Activated T-helper 1 cell treated with anti-CD3 and anti-CD28 coated beads, Interleukin-12 subunit alpha, Interleukin-12 subunit beta, Interleukin-2, Interleukin-4 antibody, amounts not matched to agents 30 ng/mL and 10 ng/mL and 1 ng/mL, durations not matched to agents 14 hours and 24 hours and 36 hours (primary cell): ENCODE measurements at regions of chr19 and their contacts with region 1.

Region 1: GRCh38 chr19:35716801-35717666 is 769 bp upstream of the KMT2B start:
- DNase-seq: peak; percentile 97
- H3K4me3 Mint-ChIP-seq: peak overlapping the region; percentile 99
- H3K27ac Mint-ChIP-seq: peak overlapping the region; percentile 98
- H3K4me1 Mint-ChIP-seq: peaks cover 50% of the 10 kb centered on the region
- H3K27me3 Mint-ChIP-seq: no peaks in the 10 kb centered on the region

Region 2: DNA sequence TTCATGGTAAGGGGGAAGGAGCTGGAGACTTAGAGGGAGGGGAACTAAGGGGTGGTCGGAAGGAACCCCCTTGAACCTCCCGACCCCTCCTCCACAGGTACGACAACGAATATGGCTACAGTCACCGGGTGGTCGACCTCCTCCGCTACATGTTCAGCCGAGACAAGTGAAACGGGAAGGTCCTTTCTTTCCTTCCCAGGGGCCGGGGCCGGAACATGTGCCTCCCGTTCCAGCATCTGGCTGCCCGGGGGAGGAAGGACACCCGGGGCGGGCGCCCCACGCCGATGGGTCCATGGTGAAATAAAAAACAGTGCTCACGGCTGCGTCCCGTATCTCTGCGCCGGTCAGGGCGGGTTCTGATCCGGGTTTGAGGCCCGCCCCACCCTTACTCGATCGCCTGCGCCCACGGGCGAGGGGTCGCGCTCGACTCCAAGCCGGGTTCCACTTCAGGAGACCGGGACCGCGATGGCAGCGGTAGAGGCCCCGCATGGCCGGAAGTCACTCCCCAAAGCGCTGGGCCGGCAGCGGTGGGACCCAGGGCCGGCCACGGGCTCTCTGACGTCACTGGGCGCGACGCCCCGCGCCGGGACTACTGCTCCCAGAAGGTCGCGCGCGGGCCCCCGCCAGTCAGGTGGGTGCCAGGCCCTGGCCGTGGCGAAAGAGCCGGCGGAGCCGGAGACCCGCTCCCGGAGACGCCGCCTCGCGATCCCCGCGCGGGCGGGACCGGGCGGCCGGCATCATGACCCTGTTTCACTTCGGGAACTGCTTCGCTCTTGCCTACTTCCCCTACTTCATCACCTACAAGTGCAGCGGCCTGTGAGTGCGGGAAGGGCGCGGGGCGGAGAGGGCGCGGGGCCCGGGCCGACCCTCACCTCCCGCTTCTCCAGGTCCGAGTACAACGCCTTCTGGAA is 171.8 kb before region 1 on chr19 and contains the start of gene TMEM147:
- intact Hi-C with region 1: loop called (anchors 5 kb)
- DNase-seq: peak; percentile 82
- H3K4me3 Mint-ChIP-seq: peak within 1 kb of the TSS; percentile 97
- H3K27ac Mint-ChIP-seq: peak within 1 kb of the TSS; percentile 91
- H3K4me1 Mint-ChIP-seq: peaks cover 34% of the 10 kb centered on the region
- H3K27me3 Mint-ChIP-seq: no peaks in the 10 kb centered on the region
- total RNA-seq, gene TMEM147: 122 and 123 TPM in 2 replicates

Region 3: DNA sequence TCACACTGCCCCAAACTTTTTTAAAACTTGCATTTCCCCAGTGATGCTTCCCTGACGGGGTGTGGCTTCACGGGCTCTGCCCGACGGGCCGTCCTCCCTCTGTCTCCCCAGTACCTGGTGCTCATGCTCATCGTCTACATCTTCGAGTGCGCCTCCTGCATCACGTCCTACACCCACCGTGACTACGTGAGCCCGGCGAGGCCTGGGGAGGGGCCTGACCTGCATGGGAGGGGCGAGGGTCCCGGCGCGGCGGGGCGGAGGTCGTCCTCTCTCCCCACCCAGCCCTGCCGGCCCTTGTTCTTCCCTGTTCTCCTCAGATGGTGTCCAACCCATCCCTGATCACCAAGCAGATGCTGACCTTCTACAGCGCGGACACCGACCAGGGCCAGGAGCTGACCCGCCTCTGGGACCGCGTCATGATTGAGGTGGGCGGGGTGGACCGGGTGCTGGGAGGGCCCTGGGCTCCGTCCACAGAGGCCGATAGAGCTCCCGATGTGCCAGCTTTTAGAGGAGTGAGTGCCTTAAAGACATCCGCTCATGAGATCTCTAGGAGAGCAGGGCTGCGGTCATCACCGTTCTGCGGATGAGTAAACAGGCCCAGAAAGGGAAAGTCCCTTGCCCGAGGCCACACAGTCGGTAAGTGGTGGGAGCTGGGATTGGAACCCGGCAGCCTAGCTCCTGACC is 43.8 kb before region 1 on chr19:
- intact Hi-C with region 1: no loop called
- DNase-seq: peak; percentile 58
- H3K4me3 Mint-ChIP-seq: peak overlapping the region; percentile 81
- H3K27ac Mint-ChIP-seq: peak overlapping the region; percentile 29
- H3K4me1 Mint-ChIP-seq: peaks cover 15% of the 10 kb centered on the region
- H3K27me3 Mint-ChIP-seq: peaks cover 37% of the 10 kb centered on the region

Region 4: GRCh38 chr19:35702223-35703012 is 14.6 kb before region 1 on chr19:
- intact Hi-C with region 1: loop called (anchors 1 kb)
- DNase-seq: peak; percentile 93
- H3K4me3 Mint-ChIP-seq: peak overlapping the region; percentile 95
- H3K27ac Mint-ChIP-seq: peak overlapping the region; percentile 97
- H3K4me1 Mint-ChIP-seq: peaks cover 18% of the 10 kb centered on the region
- H3K27me3 Mint-ChIP-seq: no peaks in the 10 kb centered on the region

Region 5: DNA sequence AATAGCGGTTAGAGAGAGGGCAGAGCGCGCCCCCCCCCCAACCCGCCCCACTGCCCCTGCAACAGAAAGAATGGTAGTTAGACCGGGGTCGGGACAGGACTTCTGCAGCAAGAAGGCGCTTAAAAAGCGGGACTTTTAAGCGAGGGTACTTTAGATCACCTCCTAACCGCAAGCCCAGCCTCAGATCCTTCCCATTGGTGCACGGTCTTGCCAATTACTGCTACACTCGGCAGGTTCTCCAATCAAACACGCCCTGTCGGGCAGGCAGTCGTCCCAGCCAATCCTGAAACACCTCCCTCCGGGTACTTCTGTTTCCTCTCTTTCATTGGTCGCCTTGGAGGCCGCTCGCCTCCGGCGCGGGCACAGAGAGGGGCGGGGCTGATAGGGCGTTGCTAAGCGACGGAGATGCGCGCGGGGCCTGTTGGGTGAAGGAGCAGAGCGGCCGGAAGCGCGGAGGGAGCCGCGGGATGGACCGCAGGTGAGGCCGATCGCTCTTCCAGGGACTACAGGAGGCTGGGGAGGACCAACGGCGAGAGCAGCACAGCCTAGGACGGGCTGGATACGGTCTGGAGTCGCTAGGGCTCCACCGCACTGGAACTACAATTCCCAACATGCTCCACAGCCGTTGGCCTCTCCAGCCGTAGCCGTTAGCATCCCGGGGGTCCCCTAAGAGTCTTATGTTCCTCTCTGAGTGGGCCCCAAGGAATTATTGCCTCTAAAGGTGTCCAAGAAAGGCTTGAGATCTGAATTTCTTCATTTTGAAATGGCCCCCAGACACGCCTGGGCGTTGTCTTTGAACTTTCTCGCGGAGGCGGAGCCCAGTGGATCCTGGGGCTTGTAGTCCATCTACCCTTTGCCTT is 40.9 kb after region 1 on chr19 and contains the start of gene PROSER3:
- intact Hi-C with region 1: loop called (anchors 1 kb)
- DNase-seq: peak; percentile 99
- H3K4me3 Mint-ChIP-seq: peak within 1 kb of the TSS; percentile 89
- H3K27ac Mint-ChIP-seq: peak within 1 kb of the TSS; percentile 90
- H3K4me1 Mint-ChIP-seq: peaks cover 29% of the 10 kb centered on the region
- H3K27me3 Mint-ChIP-seq: no peaks in the 10 kb centered on the region
- total RNA-seq, gene PROSER3: 39.5 and 45.1 TPM in 2 replicates

Region 6: GRCh38 chr19:35899547-35900214 is 182.6 kb after region 1 on chr19:
- intact Hi-C with region 1: loop called (anchors 1 kb)
- DNase-seq: peak; percentile 85
- H3K4me3 Mint-ChIP-seq: peak overlapping the region; percentile 97
- H3K27ac Mint-ChIP-seq: peak overlapping the region; percentile 98
- H3K4me1 Mint-ChIP-seq: peaks cover 42% of the 10 kb centered on the region
- H3K27me3 Mint-ChIP-seq: no peaks in the 10 kb centered on the region

Region 7: GRCh38 chr19:36114763-36115452 is 397.9 kb after region 1 on chr19 and contains the start of gene POLR2I:
- intact Hi-C with region 1: loop called (anchors 2 kb)
- DNase-seq: peak; percentile 98
- H3K4me3 Mint-ChIP-seq: peak within 1 kb of the TSS; percentile 98
- H3K27ac Mint-ChIP-seq: peak within 1 kb of the TSS; percentile 92
- H3K4me1 Mint-ChIP-seq: peaks cover 38% of the 10 kb centered on the region
- H3K27me3 Mint-ChIP-seq: peaks cover 1% of the 10 kb centered on the region
- total RNA-seq, gene POLR2I: 76.3 and 92.4 TPM in 2 replicates